Activated CD4-positive, alpha-beta memory T cell treated with anti-CD3 and anti-CD28 coated beads, Interleukin-2, amount 10 ng/mL, durations not matched to agents 7 days and 5 days (primary cell): ENCODE measurements at regions of chr12 and their contacts with region 1.

Region 1: GRCh38 chr12:4107436-4107878 is 166.1 kb upstream of the CCND2 start:
- DNase-seq: peak; percentile 77
- H3K4me3 Mint-ChIP-seq: no peak overlapping the region
- H3K27ac Mint-ChIP-seq: peak overlapping the region; percentile 81
- H3K4me1 Mint-ChIP-seq: peaks cover 56% of the 10 kb centered on the region
- H3K27me3 Mint-ChIP-seq: peaks cover 2% of the 10 kb centered on the region

Region 2: GRCh38 chr12:4118017-4118510 is 10.6 kb after region 1 on chr12:
- CTCF ChIA-PET with region 1: interaction called, 37 read pairs
- POLR2A ChIA-PET with region 1: interaction called, 21 read pairs
- DNase-seq: no peak
- H3K4me3 Mint-ChIP-seq: peak overlapping the region; percentile 63
- H3K27ac Mint-ChIP-seq: peak overlapping the region; percentile 90
- H3K4me1 Mint-ChIP-seq: peaks cover 72% of the 10 kb centered on the region
- H3K27me3 Mint-ChIP-seq: peaks cover 8% of the 10 kb centered on the region

Region 3: DNA sequence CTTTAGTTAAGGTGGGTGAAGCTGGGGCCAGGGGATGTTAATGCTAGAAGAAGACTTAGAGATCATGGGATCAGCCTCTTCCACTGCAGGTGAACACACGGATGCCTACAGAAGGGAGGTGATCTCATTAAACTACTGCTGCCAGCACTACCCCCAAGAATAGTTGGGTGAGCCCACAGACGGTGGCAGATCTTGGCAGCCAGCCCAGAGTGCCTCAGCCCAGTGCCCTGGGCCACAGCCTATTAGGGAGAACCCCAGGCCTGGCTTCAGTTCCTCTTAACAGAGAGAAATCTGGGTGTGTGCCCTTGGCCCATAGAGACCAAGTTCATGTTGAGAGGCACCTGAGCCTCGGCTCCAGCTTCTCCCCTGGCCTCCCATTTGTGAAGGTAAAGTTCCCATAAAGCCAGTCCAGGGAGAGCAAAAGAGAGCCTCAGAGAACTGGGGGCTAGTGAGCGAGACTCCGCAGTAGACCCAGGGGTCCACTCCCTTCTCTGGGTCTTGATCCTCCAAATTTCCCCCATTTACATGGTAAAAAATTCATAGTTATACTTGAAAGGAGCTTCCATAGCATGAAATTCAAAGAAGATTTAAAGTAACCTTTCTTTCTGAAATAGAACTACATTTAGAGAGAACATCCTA is 41.1 kb after region 1 on chr12:
- CTCF ChIA-PET with region 1: interaction called, 78 read pairs
- POLR2A ChIA-PET with region 1: interaction called, 23 read pairs
- DNase-seq: peak; percentile 50
- H3K4me3 Mint-ChIP-seq: no peak overlapping the region
- H3K27ac Mint-ChIP-seq: peak overlapping the region; percentile 84
- H3K4me1 Mint-ChIP-seq: peaks cover 93% of the 10 kb centered on the region
- H3K27me3 Mint-ChIP-seq: no peaks in the 10 kb centered on the region

Region 4: DNA sequence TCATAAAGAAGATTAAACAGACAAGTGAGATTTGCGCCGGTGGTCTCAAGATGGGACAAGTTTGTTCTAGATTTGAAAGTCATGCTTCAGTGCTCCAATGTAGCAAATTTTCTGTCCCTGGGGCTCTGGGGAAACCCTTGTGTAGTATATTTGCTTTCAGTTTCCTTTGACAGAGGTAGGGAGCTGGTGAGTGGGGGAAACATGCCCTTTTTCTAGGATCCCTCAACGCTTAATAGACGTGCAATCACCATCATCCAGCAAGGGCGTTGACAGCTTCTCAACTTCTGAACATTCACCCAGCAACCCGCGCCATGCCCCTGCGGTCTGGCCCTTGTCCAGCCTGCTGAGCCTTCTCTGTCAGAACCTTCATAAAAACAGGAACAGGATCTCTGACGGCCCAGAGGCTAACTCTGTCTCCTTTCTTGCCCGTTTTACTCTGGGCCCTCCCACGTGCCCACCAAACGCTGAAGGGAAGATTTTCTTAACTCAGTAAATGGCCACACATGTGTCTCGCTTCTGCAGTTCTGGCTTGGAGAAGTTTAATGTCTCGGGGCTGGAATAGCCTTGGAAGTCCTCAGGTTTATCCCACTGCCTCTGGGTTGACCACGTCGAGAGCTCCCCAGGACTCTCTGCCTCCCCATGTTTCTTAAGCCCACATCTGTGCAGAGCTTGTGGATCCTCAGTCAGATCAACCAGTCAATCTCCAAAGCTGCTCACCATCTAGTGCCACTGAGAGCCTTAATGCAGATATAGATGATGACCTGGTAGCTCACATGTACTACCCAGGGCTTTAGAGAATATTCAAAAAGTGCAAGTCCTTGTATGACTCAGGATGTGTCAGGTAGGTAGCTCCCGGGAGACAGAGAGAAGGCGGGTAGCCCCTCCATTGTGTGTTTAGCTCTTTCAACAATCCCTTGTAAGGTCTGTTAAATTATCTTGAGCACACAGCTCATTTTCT is 108.1 kb after region 1 on chr12:
- CTCF ChIA-PET with region 1: interaction called, 11 read pairs
- POLR2A ChIA-PET with region 1: interaction called, 3 read pairs
- DNase-seq: peak; percentile 24
- H3K4me3 Mint-ChIP-seq: peak overlapping the region; percentile 59
- H3K27ac Mint-ChIP-seq: peak overlapping the region; percentile 59
- H3K4me1 Mint-ChIP-seq: peaks cover 45% of the 10 kb centered on the region
- H3K27me3 Mint-ChIP-seq: peaks cover 4% of the 10 kb centered on the region